ENCODE measurements at regions of chr19 and their contacts with region 1.

Region 1: GRCh38 chr19:554817-555216 is 11.0 kb downstream of the GZMM start:
- DNase-seq: no peak
- ATAC-seq: no peak
- H3K4me3 ChIP-seq: no peak overlapping the region
- H3K4me3 Mint-ChIP-seq: no peak overlapping the region
- H3K27ac ChIP-seq: no peak overlapping the region
- H3K27ac Mint-ChIP-seq: no peak overlapping the region
- H3K4me1 ChIP-seq: peaks cover 0 to 12% of the 10 kb centered on the region in 2 experiments
- H3K4me1 Mint-ChIP-seq: peaks cover 2 to 6% (median 3%) of the 10 kb centered on the region in 3 donors
- H3K27me3 ChIP-seq: no peaks in the 10 kb centered on the region
- H3K27me3 Mint-ChIP-seq: no peaks in the 10 kb centered on the region

Region 2: DNA sequence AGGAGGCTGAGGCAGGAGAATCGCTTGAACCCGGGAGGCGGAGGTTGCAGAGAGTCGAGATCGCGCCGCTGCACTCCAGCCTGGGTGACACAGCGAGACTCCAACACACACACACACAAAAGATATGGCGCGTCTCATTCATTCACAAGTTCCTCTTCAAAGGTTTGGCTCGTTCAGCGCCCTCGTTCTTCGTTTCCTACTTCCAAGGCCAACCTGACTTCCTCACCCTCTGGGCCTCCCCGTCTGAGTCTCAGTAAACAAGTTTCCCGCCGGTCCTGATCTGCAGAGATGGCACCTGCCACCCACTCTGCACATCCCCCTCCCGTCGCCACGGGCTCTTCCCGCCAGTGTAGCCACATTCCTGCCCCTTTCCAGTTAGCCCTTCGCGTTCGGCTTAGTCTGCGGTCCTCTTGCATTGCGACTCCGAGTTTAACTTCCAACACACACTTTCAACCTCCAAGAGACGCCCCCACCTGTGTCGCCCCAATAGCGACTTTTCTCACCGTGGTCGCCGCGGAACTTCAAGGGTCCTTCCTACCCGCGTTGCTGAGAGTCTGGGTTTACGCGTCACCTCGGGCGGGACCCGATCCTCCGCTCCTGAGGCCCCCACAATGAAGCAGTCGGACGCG is 16.2 kb after region 1 on chr19:
- CTCF ChIA-PET with region 1: no interaction called
- POLR2A ChIA-PET with region 1: interaction called in 1 of 2 experiments, 12 read pairs
- DNase-seq: peak in 34 of 35 experiments; percentile 35 to 77 (median 58)
- ATAC-seq: peak; percentile 19 to 36 (median 22)
- H3K4me3 ChIP-seq: peak overlapping the region; percentile 62 to 68
- H3K4me3 Mint-ChIP-seq: peak overlapping the region; percentile 80 to 99 (median 93)
- H3K27ac ChIP-seq: peak overlapping the region; percentile 91
- H3K27ac Mint-ChIP-seq: peak overlapping the region; percentile 95 to 97
- H3K4me1 ChIP-seq: peaks cover 14 to 46% of the 10 kb centered on the region in 2 experiments
- H3K4me1 Mint-ChIP-seq: peaks cover 28 to 42% (median 29%) of the 10 kb centered on the region in 3 donors
- H3K27me3 ChIP-seq: no peaks in the 10 kb centered on the region
- H3K27me3 Mint-ChIP-seq: no peaks in the 10 kb centered on the region